Ascending aorta (tissue), 2 donors: ENCODE measurements at regions of chr5 and their contacts with region 1.

Region 1: DNA sequence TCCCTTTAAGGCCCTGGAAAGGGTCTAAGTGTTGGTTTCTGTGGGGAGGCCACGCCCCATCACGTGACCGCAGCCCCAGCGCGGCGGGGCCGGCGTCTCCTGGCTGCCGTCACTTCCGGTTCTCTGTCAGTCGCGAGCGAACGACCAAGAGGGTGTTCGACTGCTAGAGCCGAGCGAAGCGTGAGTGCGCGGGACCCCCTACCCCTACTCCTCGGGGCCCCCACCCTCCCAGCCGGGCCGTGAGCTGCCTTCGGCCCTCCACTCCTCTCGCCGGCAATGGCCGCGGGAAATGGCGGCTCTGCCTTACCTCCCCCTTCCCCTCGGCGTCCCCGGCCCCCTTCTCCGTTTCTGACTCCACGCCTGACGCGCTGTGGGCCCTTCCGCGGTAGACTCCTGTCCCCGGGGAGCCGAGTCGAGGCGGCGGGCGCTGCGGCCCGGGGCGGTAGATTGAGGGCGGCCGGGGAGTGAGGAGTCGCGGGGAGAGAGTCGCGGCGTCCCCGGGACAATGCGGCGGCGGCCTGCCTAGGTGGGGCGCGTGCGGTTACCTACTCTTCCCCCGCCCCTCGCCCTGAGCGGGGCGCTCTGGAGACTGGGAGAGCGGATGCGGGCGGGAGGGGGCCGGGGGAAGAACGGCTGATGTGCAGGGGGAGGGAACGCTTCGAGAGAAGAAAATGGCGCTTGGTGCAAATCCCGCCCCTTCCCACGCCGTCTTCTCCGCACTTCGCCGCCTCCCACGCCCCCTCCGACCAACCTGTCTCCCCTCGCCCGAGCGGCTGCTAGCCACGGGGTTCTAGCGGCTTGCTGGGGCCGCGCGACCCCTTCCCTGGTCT is at the start of gene SUB1:
- DNase-seq: peak; percentile 73 to 96
- H3K4me3 ChIP-seq: peak within 1 kb of the TSS; percentile 94 to 96
- H3K27ac ChIP-seq: peak within 1 kb of the TSS; percentile 99
- H3K4me1 ChIP-seq: peaks cover 6 to 18% of the 10 kb centered on the region in 2 donors
- H3K27me3 ChIP-seq: no peaks in the 10 kb centered on the region
- CTCF ChIP-seq: peak in 1 of 3 experiments; percentile 13
- total RNA-seq, gene SUB1: 103 TPM

Region 2: DNA sequence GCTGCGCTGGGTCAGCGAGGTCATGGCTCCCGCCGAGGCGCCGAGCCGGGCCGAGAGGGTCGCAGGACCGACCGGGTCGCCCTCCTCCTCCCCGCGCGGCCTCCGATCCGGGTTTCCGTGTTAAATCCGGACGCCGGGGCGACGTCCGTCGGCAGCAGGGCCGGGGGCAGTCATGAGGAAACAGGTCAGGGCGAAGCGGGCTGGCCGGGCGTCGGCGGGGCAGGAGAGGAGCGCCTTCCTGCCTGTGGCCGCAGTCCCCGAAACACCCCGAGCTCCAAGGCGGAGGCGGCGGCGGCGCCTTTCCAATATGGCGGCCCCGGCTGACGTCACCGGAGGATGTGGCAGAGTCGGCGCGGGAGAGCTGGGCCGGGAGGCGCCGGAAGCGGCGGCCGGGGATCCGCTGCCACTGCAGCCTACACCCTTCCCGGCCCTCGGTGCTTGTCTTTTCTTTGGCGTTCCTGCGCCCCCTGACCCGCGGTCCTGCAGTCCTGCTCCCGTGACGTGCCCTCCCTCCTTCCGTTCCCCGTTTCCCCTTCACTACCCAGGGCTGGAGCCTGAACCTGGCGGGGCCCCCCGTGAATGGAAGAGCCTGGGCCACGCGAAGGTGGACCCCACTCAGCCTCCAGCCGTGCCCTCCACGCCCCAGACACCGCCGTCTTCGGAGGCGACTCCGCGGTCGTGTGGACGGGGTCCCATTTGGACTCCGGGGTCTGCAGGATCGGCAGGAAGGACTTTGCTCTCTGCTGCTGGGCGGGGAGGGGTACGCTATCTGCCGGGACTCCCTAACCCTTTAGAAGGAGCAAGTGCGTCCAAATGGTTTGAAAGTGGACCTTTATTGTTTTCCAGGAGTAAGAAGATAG is 411.4 kb before region 1 on chr5 and contains the start of gene GOLPH3:
- intact Hi-C with region 1: loop called (anchors 5 kb)
- DNase-seq: peak; percentile 76 to 97
- H3K4me3 ChIP-seq: peak within 1 kb of the TSS; percentile 92 to 99
- H3K27ac ChIP-seq: peak within 1 kb of the TSS; percentile 100
- H3K4me1 ChIP-seq: peaks cover 4 to 16% of the 10 kb centered on the region in 2 donors
- H3K27me3 ChIP-seq: no peaks in the 10 kb centered on the region
- CTCF ChIP-seq: peak in 1 of 3 experiments; percentile 13
- total RNA-seq, gene GOLPH3: 171 TPM

Region 3: DNA sequence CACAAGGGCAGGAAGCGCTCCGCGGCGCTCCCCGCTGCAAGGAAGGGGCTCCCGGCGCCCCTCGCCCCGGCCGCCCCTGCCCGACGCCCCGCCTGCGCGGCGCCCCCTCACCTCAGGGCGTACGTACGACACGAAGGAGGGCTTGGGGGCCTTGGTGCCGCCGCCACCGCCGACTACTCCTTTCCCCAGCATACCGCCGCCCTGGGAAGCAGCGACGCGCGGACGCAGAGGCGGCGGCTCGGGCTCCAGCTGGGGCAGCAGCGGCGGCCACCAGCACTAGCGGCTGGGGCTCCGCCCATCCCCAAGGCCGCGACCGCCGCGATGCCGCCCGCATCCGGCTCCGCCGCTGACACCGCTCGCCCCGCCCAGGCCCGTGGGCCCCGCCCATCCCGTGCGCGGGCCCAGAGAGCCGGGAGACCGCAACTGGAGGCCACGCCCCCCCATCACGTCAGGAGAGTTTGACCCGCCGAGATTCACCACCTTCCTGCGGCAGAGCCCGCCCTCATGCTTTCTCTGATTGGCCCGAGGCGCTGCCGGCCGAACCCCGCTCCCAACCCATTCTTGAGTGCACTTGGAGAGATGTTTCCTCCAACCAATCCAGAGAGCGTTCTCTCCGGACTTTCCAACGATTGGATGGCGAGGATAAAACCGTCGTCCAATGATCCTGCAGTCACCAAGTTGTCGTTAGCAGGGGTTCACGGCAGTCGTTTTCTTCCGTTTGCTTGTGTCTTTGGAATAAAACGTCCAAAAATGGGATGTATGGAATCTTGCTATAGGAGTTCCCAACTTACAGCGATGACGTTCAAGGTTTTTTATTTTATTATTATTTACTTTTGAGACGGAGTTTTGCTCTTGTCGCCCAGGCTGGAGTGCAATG is 272.8 kb before region 1 on chr5 and contains the start of gene MTMR12:
- intact Hi-C with region 1: loop called (anchors 2 kb)
- DNase-seq: peak; percentile 99 to 100
- H3K4me3 ChIP-seq: peak within 1 kb of the TSS; percentile 80 to 95
- H3K27ac ChIP-seq: peak within 1 kb of the TSS; percentile 94 to 95
- H3K4me1 ChIP-seq: peaks cover 6 to 14% of the 10 kb centered on the region in 2 donors
- H3K27me3 ChIP-seq: no peaks in the 10 kb centered on the region
- CTCF ChIP-seq: no peak
- total RNA-seq, gene MTMR12: 19.5 TPM

Region 4: GRCh38 chr5:32489791-32490582 is 95.7 kb before region 1 on chr5:
- intact Hi-C with region 1: loop called (anchors 1 kb)
- DNase-seq: peak in 1 of 2 donors; percentile 86
- H3K4me3 ChIP-seq: no peak overlapping the region
- H3K27ac ChIP-seq: no peak overlapping the region
- H3K4me1 ChIP-seq: peaks cover 0 to 5% of the 10 kb centered on the region in 2 donors
- H3K27me3 ChIP-seq: no peaks in the 10 kb centered on the region
- CTCF ChIP-seq: peak; percentile 78 to 86 (median 81)

Region 5: GRCh38 chr5:32538031-32538547 is 47.6 kb before region 1 on chr5:
- intact Hi-C with region 1: loop called (anchors 2 kb)
- DNase-seq: no peak
- H3K4me3 ChIP-seq: no peak overlapping the region
- H3K27ac ChIP-seq: peak overlapping the region; percentile 45 to 57
- H3K4me1 ChIP-seq: peaks cover 0 to 6% of the 10 kb centered on the region in 2 donors
- H3K27me3 ChIP-seq: no peaks in the 10 kb centered on the region
- CTCF ChIP-seq: no peak

Region 6: DNA sequence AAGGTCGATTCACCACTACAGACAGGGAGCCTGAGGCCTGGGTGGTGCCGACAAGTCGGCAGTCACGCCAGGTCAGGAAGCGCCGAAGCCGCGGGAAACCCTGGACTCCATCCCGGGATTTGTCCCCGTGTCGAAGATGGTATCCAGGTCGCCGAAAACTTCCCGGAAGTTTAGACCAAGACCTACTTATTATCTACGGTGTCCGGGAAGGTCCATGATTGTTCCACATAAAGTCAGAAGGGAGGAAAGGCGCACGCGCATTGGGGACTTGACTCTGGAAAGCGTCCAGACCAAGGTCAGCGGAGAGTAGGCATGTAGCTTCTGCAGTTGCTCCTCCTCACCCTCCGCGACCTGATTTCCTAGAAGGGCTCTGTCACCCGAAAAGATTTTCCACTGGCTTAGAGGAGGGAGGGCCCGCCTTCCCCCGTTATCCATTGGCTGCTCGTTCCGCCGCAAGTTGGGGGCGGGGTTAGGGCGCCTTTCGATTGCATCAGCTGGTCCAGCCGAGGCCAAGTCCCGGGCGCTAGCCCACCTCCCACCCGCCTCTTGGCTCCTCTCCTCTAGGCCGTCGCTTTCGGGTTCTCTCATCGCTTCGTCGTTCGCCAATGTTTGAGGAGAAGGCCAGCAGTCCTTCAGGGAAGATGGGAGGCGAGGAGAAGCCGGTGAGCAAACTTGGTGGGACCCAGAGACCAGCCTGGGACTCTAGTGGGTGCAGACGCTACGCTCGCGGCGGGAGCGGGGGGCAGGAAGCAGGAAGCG is 855.0 kb after region 1 on chr5 and contains the start of gene TARS1:
- intact Hi-C with region 1: loop called (anchors 5 kb)
- DNase-seq: peak; percentile 97 to 99
- H3K4me3 ChIP-seq: peak within 1 kb of the TSS; percentile 78 to 92
- H3K27ac ChIP-seq: peak within 1 kb of the TSS; percentile 91 to 93
- H3K4me1 ChIP-seq: peaks cover 7 to 11% of the 10 kb centered on the region in 2 donors
- H3K27me3 ChIP-seq: no peaks in the 10 kb centered on the region
- CTCF ChIP-seq: no peak
- total RNA-seq, gene TARS1: 60.5 TPM